ENCODE measurements at regions of chr6 and their contacts with region 1.

Region 1: DNA sequence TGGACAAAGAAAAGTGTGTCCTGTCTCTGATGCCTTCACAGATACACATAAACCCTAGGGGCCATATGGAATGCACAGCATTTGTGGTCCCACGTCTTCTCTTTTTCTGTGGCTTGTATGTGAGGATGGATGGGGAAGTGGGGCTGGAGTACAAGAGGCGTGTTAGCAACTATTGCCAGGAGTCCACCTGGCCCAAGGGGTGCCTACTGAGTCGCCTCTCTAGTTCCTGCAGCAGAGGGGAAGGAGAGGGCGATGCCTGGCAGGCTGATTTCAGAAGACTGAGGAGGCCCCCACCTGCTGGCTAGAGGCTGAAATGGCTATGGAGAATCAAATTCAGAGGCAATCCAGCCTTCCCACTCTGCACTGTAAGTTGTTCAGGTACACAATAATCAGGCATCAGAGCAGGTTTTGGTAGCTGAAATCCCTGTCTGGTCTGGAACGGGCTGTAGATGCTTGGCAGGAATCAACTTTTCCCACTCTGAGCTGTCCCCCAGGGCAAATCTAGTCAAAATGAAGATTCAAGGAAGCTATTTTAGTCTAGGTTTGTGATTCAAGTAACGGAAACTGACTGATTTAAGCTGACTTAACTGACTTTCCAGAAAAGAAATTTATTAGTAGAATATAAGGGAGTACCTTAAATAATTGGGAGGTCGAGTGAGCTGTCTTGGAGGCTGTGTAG is 14.9 kb upstream of the PPARD start:
- DNase-seq: peak; percentile 73
- ATAC-seq: peak; percentile 80

Region 2: GRCh38 chr6:35294308-35294945 is 33.1 kb before region 1 on chr6:
- intact Hi-C with region 1: loop called (anchors 5 kb)
- DNase-seq: peak; percentile 64
- ATAC-seq: peak; percentile 36

Region 3: DNA sequence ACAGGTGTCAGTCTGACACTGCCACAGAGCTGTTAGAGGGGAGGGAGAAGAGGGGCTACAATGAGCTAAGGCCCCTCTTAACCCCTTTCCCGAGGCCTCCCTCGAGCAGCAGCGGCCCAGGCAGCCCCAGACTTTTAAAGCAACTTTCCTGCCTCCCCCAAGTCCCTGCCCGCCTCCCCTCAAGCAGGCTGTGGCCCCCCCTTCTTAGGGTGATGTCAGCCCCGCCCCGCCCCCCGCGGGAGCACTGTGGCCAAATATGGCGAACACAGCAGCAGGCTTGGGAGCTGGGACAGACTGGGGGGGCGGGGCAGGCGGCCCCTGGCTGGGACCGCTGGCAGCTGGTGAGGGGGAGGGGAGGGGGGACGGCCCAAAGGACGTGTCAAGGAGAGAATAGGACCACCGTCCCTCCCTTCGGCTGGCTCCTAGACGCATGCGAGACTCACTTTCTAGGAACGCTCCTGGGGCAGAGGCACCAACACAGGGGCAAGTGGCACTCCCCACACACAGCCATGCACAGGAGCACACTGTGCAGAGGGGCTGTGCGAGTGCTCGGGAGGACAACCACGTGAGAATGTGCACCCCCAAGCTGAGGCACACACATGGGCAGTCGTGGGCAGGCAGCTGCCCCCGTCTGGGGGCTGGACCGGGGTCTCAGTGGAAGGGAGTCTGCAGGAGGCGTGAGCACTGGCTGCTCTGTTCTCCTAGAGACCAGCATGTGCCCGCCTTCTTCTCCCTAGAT is 162.7 kb after region 1 on chr6:
- intact Hi-C with region 1: no loop called
- DNase-seq: peak; percentile 88
- ATAC-seq: peak; percentile 79

Measured in Right ventricle myocardium superior (tissue), 1 donor.